CD8-positive, alpha-beta memory T cell (primary cell): ENCODE measurements at regions of chr17 and their contacts with region 1.

Region 1: GRCh38 chr17:59786536-59787319 is 79.3 kb downstream of the VMP1 start:
- DNase-seq: peak; percentile 43 to 83 (median 76)
- H3K4me3 ChIP-seq: peak overlapping the region; percentile 28
- H3K4me3 Mint-ChIP-seq: peak overlapping the region; percentile 66 to 89 (median 80)
- H3K27ac ChIP-seq: peak overlapping the region; percentile 71
- H3K27ac Mint-ChIP-seq: peak overlapping the region; percentile 89 to 99 (median 96)
- H3K4me1 ChIP-seq: peaks cover 49% of the 10 kb centered on the region
- H3K4me1 Mint-ChIP-seq: peaks cover 40 to 57% (median 55%) of the 10 kb centered on the region in 3 donors
- H3K27me3 ChIP-seq: no peaks in the 10 kb centered on the region
- H3K27me3 Mint-ChIP-seq: no peaks in the 10 kb centered on the region

Region 2: GRCh38 chr17:59734226-59734625 is 52.5 kb before region 1 on chr17:
- CTCF ChIA-PET with region 1: no interaction called
- POLR2A ChIA-PET with region 1: no interaction called
- DNase-seq: no peak
- H3K4me3 ChIP-seq: no peak overlapping the region
- H3K4me3 Mint-ChIP-seq: no peak overlapping the region
- H3K27ac ChIP-seq: no peak overlapping the region
- H3K27ac Mint-ChIP-seq: no peak overlapping the region
- H3K4me1 ChIP-seq: no peaks in the 10 kb centered on the region
- H3K4me1 Mint-ChIP-seq: peaks cover 9 to 15% (median 14%) of the 10 kb centered on the region in 3 donors
- H3K27me3 ChIP-seq: no peaks in the 10 kb centered on the region
- H3K27me3 Mint-ChIP-seq: no peaks in the 10 kb centered on the region

Region 3: GRCh38 chr17:59837308-59838051 is 50.8 kb after region 1 on chr17:
- CTCF ChIA-PET with region 1: interaction called, 13 read pairs
- POLR2A ChIA-PET with region 1: interaction called, 17 read pairs
- DNase-seq: peak; percentile 46 to 86 (median 66)
- H3K4me3 ChIP-seq: peak overlapping the region; percentile 85
- H3K4me3 Mint-ChIP-seq: peak overlapping the region; percentile 92 to 99 (median 94)
- H3K27ac ChIP-seq: peak overlapping the region; percentile 95
- H3K27ac Mint-ChIP-seq: peak overlapping the region; percentile 93 to 100 (median 96)
- H3K4me1 ChIP-seq: peaks cover 9% of the 10 kb centered on the region
- H3K4me1 Mint-ChIP-seq: peaks cover 47 to 63% (median 61%) of the 10 kb centered on the region in 3 donors
- H3K27me3 ChIP-seq: no peaks in the 10 kb centered on the region
- H3K27me3 Mint-ChIP-seq: no peaks in the 10 kb centered on the region

Region 4: DNA sequence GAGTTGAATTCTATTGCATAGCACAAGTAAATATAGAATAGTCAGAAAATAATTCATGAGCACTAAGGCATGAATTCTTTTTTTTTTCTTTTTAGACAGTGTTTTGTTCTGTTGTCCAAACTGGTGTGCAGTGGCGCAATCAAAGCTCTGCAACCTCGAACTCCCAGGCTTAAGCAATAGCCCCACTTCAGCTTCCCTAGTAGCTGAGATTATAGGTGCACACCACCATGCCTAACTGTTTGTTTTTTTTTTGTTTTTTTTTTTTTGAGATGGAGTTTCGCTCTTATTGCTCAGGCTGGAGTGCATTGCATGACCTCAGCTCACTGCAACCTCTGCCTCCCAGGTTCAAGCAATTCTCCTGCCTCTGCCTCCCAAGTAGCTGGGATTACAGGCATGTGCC is 89.4 kb after region 1 on chr17:
- CTCF ChIA-PET with region 1: no interaction called
- POLR2A ChIA-PET with region 1: no interaction called
- DNase-seq: no peak
- H3K4me3 ChIP-seq: no peak overlapping the region
- H3K4me3 Mint-ChIP-seq: no peak overlapping the region
- H3K27ac ChIP-seq: no peak overlapping the region
- H3K27ac Mint-ChIP-seq: no peak overlapping the region
- H3K4me1 ChIP-seq: no peaks in the 10 kb centered on the region
- H3K4me1 Mint-ChIP-seq: peaks cover 0 to 3% (median 0%) of the 10 kb centered on the region in 3 donors
- H3K27me3 ChIP-seq: no peaks in the 10 kb centered on the region
- H3K27me3 Mint-ChIP-seq: no peaks in the 10 kb centered on the region

Region 5: DNA sequence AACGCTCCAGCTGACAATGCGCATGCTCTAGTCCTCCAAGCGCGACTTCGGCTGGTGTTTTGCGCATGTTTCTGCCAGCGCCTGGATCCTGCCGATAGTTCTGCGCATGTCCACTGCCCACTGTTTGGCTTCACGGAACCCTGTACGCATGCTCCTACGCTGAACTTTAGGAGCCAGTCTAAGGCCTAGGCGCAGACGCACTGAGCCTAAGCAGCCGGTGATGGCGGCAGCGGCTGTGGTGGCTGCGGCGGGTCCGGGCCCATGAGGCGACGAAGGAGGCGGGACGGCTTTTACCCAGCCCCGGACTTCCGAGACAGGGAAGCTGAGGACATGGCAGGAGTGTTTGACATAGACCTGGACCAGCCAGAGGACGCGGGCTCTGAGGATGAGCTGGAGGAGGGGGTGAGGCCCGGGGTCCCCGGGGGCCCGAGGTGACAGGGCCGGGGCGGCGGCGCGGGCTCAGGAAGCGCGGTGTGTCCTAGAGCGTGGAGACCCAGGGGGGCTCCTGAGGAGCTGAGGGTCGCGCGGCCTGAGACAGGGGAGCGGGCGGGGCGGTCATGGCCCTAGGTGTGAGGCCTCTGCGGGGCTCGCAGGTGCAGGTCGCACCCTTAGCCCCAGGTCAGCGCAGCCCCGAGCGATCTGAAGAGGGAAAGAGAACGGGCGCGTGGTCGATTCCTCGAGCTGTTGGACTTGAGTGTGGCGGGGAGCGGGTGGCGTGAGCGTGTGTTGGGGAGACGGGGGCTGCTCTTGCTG is 106.4 kb after region 1 on chr17 and contains the starts of genes RPS6KB1 and TUBD1:
- CTCF ChIA-PET with region 1: no interaction called
- POLR2A ChIA-PET with region 1: interaction called, 10 read pairs
- DNase-seq: peak; percentile 93 to 99 (median 97)
- H3K4me3 ChIP-seq: peak within 1 kb of the TSS; percentile 95
- H3K4me3 Mint-ChIP-seq: peak within 1 kb of the TSS; percentile 98 to 100 (median 99)
- H3K27ac ChIP-seq: peak within 1 kb of the TSS; percentile 90
- H3K27ac Mint-ChIP-seq: peak within 1 kb of the TSS; percentile 97 to 100 (median 100)
- H3K4me1 ChIP-seq: peaks cover 24% of the 10 kb centered on the region
- H3K4me1 Mint-ChIP-seq: peaks cover 46 to 77% (median 71%) of the 10 kb centered on the region in 3 donors
- H3K27me3 ChIP-seq: no peaks in the 10 kb centered on the region
- H3K27me3 Mint-ChIP-seq: peaks cover 0 to 1% of the 10 kb centered on the region in 2 donors
- total RNA-seq, gene RPS6KB1: 44.5 to 52.3 TPM
- total RNA-seq, gene TUBD1: 9.5 to 11.9 TPM